ENCODE measurements at regions of chr19 and their contacts with region 1.

Region 1: DNA sequence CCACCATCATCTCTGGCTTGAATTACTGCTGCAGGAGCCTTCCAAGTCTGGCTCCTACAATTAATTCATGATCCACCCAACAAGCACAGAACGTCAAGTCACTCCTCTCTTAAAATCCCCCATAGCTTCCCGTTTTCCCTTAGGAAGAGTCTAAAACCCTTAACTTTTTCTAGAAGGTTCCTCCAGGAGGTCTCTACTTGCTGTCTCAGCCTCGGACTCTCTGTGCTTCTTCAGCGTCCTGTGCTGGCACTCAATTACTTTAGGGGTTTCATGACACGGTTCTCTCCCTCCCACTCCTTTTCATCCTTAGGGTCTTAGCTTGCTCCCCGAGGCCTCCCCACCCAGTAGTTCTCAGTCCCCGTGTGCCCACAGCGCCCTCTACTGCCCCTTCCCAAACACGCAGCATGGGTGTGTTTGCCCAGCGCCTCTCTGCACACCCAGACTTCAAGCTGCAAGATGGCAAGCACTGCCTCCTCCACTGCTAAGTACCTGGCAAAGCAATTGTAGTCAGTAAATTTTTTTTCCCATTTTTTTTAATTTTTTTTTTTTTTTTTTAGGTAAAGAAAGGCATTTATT is 25.8 kb upstream of the MAP3K10 start:
- DNase-seq: peak; percentile 79
- ATAC-seq: peak; percentile 84
- H3K4me3 Mint-ChIP-seq: no peak overlapping the region
- H3K27ac Mint-ChIP-seq: peak overlapping the region; percentile 14
- H3K4me1 Mint-ChIP-seq: peaks cover 9% of the 10 kb centered on the region
- H3K27me3 Mint-ChIP-seq: no peaks in the 10 kb centered on the region

Region 2: DNA sequence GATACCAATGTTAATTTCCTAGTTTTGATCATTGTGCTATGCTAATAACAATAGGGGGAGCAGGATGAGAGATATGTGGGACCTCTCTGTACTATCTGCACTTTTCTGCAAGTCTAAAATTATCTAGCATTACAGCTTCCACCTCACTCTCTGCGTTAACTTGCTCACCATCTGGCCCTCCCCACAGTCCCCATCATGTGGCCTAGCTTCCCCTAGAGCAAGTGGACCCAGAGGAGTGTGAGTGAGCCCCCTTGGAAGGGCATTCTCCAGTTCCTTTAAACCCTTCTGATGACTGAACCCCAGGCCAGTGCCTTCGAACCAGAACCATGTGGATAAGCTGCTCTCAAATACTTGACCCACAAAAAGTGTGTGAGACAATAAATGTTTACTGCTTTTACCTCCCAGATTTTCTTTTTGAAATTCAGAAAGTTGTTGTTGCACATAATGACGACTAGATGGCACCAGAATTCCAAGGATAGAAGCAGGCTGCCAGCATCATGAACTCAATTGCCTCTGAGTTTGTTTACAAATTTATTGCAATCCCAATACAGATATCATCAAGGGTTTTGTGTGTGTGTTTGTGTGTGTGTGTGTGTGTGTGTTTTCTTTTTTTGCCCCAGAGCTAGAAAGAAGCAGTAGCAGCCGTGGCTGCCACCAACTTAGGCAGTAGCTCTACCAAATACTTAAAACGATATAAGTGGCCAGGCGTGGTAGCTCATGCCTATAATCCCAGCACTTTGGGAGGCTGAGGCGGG is 25.7 kb before region 1 on chr19:
- CTCF ChIA-PET with region 1: interaction called, 30 read pairs
- DNase-seq: no peak
- ATAC-seq: no peak
- H3K4me3 Mint-ChIP-seq: no peak overlapping the region
- H3K27ac Mint-ChIP-seq: no peak overlapping the region
- H3K4me1 Mint-ChIP-seq: peaks cover 17% of the 10 kb centered on the region
- H3K27me3 Mint-ChIP-seq: peaks cover 20% of the 10 kb centered on the region

Region 3: DNA sequence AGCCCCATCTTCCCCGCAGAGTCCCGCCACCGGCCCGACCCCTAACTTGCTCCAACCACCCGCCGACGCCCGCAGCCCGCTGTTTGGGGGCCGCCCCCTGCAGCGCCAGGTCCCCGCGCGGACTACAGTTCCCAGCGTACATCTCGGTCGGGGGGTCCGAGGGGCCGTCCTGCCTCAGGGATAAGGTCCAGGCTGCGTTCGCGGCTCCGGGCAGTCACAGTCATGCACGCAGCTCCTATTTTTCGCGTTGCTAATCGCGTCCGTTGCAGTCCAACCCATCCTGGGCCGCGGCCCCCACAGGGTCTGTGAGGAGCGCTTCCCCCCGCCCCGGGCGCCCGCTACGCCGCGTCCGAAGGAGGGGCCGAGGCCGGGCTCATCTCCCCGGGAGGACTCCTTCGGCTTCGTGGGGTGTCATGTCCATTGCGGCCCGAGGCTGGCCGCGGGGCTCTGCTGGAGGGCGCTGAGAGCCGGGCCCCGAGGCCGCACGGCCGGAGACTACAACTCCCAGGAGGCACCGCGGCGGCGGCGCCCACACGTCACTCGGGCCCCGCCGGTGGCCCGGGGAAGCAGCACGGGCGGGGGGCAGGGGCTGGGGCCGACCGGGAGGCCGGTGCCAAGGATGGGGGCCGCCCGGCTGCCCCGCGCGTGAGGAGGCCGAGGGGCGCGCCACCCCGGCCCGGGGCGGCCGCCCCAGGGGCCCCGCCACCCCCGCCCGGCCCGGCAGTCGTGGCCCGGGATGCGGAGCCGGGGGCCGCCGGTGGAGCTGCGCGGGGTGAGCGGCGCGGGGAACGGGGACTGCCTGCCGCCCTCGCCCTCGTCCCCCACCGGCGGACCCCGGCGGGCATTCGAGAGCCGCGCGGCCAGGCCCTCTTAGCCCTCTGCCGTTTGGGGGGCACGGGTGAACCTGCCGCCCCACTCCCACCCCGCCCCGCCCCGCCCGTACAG is 25.7 kb after region 1 on chr19 and contains the start of gene MAP3K10:
- CTCF ChIA-PET with region 1: interaction called, 11 read pairs
- DNase-seq: peak; percentile 89
- ATAC-seq: peak; percentile 91
- H3K4me3 Mint-ChIP-seq: peak within 1 kb of the TSS; percentile 81
- H3K27ac Mint-ChIP-seq: peak within 1 kb of the TSS; percentile 92
- H3K4me1 Mint-ChIP-seq: peaks cover 22% of the 10 kb centered on the region
- H3K27me3 Mint-ChIP-seq: peaks cover 4% of the 10 kb centered on the region
- total RNA-seq, gene MAP3K10: 19.9 to 25.4 TPM

Region 4: GRCh38 chr19:40266119-40266518 is 100.7 kb after region 1 on chr19:
- CTCF ChIA-PET with region 1: no interaction called
- DNase-seq: no peak
- ATAC-seq: no peak
- H3K4me3 Mint-ChIP-seq: no peak overlapping the region
- H3K27ac Mint-ChIP-seq: no peak overlapping the region
- H3K4me1 Mint-ChIP-seq: no peaks in the 10 kb centered on the region
- H3K27me3 Mint-ChIP-seq: no peaks in the 10 kb centered on the region

Measured in activated CD8-positive, alpha-beta memory T cell treated with anti-CD3 and anti-CD28 coated beads, Interleukin-2, amount 10 ng/mL, durations not matched to agents 7 days and 5 days (primary cell).